PC-9 (cell line): ENCODE measurements at regions of chr19 and their contacts with region 1.

Region 1: DNA sequence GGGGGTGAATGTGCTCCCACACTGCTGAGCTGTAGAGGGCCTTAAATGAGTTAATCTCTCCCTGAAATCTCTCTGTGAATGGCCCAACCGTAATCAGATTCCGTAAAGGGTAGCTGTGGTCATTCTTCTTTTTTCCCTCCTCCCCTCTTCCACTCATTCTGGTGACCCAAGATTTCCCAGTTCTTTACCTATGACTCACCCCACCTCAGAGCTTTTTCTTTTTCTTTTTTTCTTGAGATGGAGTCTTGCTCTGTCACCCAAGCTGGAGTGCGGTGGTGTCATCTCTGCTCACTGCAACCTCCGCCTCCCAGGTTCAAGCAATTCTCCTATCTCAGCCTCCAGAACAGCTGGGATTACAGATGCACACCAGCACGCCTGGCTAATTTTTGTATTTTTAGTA is 33.3 kb upstream of the MUC16 start:
- DNase-seq: peak; percentile 49 to 91
- H3K4me3 ChIP-seq: no peak overlapping the region
- H3K27ac ChIP-seq: no peak overlapping the region
- H3K4me1 ChIP-seq: peaks cover 65% of the 10 kb centered on the region
- H3K27me3 ChIP-seq: no peaks in the 10 kb centered on the region
- CTCF ChIP-seq: no peak

Region 2: GRCh38 chr19:8922591-8922990 is 121.0 kb before region 1 on chr19:
- CTCF ChIA-PET with region 1: no interaction called
- POLR2A ChIA-PET with region 1: interaction called, 11 read pairs
- intact Hi-C with region 1: no loop called
- DNase-seq: peak in 1 of 2 experiments; percentile 23
- H3K4me3 ChIP-seq: no peak overlapping the region
- H3K27ac ChIP-seq: no peak overlapping the region
- H3K4me1 ChIP-seq: no peaks in the 10 kb centered on the region
- H3K27me3 ChIP-seq: no peaks in the 10 kb centered on the region
- CTCF ChIP-seq: no peak

Region 3: GRCh38 chr19:8998938-8999337 is 44.6 kb before region 1 on chr19:
- CTCF ChIA-PET with region 1: no interaction called
- POLR2A ChIA-PET with region 1: interaction called, 15 read pairs
- intact Hi-C with region 1: no loop called
- DNase-seq: no peak
- H3K4me3 ChIP-seq: no peak overlapping the region
- H3K27ac ChIP-seq: no peak overlapping the region
- H3K4me1 ChIP-seq: peaks cover 3% of the 10 kb centered on the region; the same call in 1 of the 2 replicates
- H3K27me3 ChIP-seq: no peaks in the 10 kb centered on the region
- CTCF ChIP-seq: no peak

Region 4: GRCh38 chr19:9032136-9032631 is 11.4 kb before region 1 on chr19:
- CTCF ChIA-PET with region 1: no interaction called
- POLR2A ChIA-PET with region 1: interaction called, 8 read pairs
- intact Hi-C with region 1: loop called (anchors 1 kb)
- DNase-seq: peak; percentile 81 to 100
- H3K4me3 ChIP-seq: no peak overlapping the region
- H3K27ac ChIP-seq: peak overlapping the region; percentile 52
- H3K4me1 ChIP-seq: peaks cover 27% of the 10 kb centered on the region
- H3K27me3 ChIP-seq: no peaks in the 10 kb centered on the region
- CTCF ChIP-seq: no peak

Region 5: GRCh38 chr19:9075064-9075949 is 31.8 kb after region 1 on chr19:
- CTCF ChIA-PET with region 1: interaction called, 3 read pairs
- POLR2A ChIA-PET with region 1: interaction called, 5 read pairs
- intact Hi-C with region 1: loop called (anchors 1 kb)
- DNase-seq: peak; percentile 97 to 99
- H3K4me3 ChIP-seq: no peak overlapping the region; the same call in 1 of the 2 replicates
- H3K27ac ChIP-seq: peak overlapping the region; percentile 84
- H3K4me1 ChIP-seq: peaks cover 23% of the 10 kb centered on the region
- H3K27me3 ChIP-seq: no peaks in the 10 kb centered on the region
- CTCF ChIP-seq: no peak